T-cell (primary cell): ENCODE measurements at regions of chr3 and their contacts with region 1.

Region 1: GRCh38 chr3:48439820-48440589 is at the starts of genes CCDC51 and TMA7:
- DNase-seq: peak; percentile 92 to 99 (median 97)
- ATAC-seq: peak; percentile 94 to 97 (median 95)
- H3K4me3 ChIP-seq: peak within 1 kb of the TSS; percentile 80 to 90
- H3K4me3 Mint-ChIP-seq: peak within 1 kb of the TSS; percentile 81 to 96 (median 89)
- H3K27ac ChIP-seq: peak within 1 kb of the TSS; percentile 93
- H3K27ac Mint-ChIP-seq: peak within 1 kb of the TSS; percentile 98 to 99
- H3K4me1 ChIP-seq: peaks cover 12 to 49% of the 10 kb centered on the region in 2 experiments
- H3K4me1 Mint-ChIP-seq: peaks cover 28 to 40% (median 37%) of the 10 kb centered on the region in 3 donors
- H3K27me3 ChIP-seq: no peaks in the 10 kb centered on the region
- H3K27me3 Mint-ChIP-seq: no peaks in the 10 kb centered on the region
- total RNA-seq, gene CCDC51: 5.0 to 7.9 (median 6.4) TPM
- total RNA-seq, gene TMA7: 216 to 245 (median 229) TPM

Region 2: GRCh38 chr3:48240711-48241491 is 199.1 kb before region 1 on chr3 and contains the start of gene ZNF589:
- CTCF ChIA-PET with region 1: interaction called in 1 of 2 experiments, 12 read pairs
- POLR2A ChIA-PET with region 1: interaction called in 1 of 2 experiments, 3 read pairs
- DNase-seq: peak; percentile 82 to 99 (median 93)
- ATAC-seq: peak; percentile 97 to 99 (median 99)
- H3K4me3 ChIP-seq: peak within 1 kb of the TSS; percentile 85 to 98
- H3K4me3 Mint-ChIP-seq: peak within 1 kb of the TSS; percentile 85 to 92 (median 90)
- H3K27ac ChIP-seq: peak within 1 kb of the TSS; percentile 82
- H3K27ac Mint-ChIP-seq: peak within 1 kb of the TSS; percentile 90 to 91
- H3K4me1 ChIP-seq: peaks cover 2 to 32% of the 10 kb centered on the region in 2 experiments
- H3K4me1 Mint-ChIP-seq: peaks cover 19 to 31% (median 22%) of the 10 kb centered on the region in 3 donors
- H3K27me3 ChIP-seq: no peaks in the 10 kb centered on the region
- H3K27me3 Mint-ChIP-seq: no peaks in the 10 kb centered on the region
- total RNA-seq, gene ZNF589: 34.4 to 47.6 (median 44.2) TPM

Region 3: DNA sequence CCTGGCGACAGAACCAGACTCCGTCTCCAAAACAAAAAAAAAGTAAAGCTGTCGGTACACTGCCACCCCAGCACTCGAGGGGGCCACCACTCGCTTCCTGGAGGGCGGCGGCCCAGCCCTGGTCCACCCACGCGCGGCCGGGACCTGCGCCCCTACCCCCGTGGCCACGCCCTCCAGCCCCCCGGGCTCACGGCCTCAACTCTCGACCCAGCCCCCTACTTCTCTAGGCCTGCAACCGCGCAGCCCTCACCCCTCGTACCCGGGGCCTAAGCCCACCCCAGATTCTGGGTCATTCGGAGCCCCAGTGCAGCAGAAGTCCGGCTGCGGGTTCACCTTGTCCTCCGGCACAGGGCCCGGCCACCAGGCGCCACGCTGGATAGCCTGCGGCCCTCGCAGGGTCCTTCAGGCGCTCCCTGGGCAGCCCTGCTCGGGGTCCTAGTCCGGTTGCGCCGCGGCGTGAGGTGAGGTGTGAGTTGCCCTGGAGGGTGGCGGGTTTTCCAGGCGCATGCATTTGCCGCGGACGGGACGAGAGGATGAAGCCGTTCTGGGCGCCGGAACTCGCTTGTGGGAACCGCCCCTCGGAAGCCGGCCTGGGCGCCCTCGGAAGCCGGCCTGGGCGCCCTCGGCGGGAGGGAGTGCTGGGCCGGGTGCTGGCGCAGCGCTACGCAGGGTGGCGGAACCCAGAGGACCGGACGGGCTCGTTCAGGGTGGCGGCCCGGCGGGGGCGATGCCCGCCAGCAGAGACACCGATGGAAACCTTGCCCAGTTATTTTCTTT is 138.8 kb before region 1 on chr3:
- CTCF ChIA-PET with region 1: interaction called in 1 of 2 experiments, 11 read pairs
- POLR2A ChIA-PET with region 1: interaction called in 1 of 2 experiments, 3 read pairs
- DNase-seq: peak; percentile 61 to 92 (median 81)
- ATAC-seq: peak; percentile 86 to 93 (median 90)
- H3K4me3 ChIP-seq: peak within 1 kb of the TSS; percentile 68 to 92
- H3K4me3 Mint-ChIP-seq: peak within 1 kb of the TSS; percentile 93 to 96 (median 94)
- H3K27ac ChIP-seq: peak within 1 kb of the TSS; percentile 91
- H3K27ac Mint-ChIP-seq: peak within 1 kb of the TSS; percentile 97 to 99
- H3K4me1 ChIP-seq: peaks cover 8 to 22% of the 10 kb centered on the region in 2 experiments
- H3K4me1 Mint-ChIP-seq: peaks cover 30 to 44% (median 42%) of the 10 kb centered on the region in 3 donors
- H3K27me3 ChIP-seq: no peaks in the 10 kb centered on the region
- H3K27me3 Mint-ChIP-seq: no peaks in the 10 kb centered on the region

Region 4: DNA sequence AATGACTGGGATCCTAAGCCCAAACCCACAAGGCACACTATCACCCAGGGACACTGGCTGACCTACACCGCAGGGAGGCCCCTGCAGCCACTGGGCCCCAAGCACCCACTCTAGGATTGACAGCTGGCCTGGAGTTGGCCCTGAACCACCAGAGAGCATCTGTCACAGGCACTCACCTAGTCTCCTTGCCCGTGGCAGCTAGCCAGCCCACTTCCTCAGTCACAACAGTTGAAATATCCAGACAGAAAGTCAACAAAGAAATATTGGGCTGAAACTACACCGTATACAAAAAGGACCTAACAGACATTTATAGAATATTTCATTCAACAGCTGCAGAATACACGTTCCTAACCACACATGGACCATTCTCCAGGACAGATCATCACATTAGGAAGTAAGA is 101.4 kb before region 1 on chr3:
- CTCF ChIA-PET with region 1: no interaction called
- POLR2A ChIA-PET with region 1: no interaction called
- DNase-seq: no peak
- ATAC-seq: no peak
- H3K4me3 ChIP-seq: no peak overlapping the region
- H3K4me3 Mint-ChIP-seq: no peak overlapping the region
- H3K27ac ChIP-seq: no peak overlapping the region
- H3K27ac Mint-ChIP-seq: no peak overlapping the region
- H3K4me1 ChIP-seq: no peaks in the 10 kb centered on the region
- H3K4me1 Mint-ChIP-seq: no peaks in the 10 kb centered on the region
- H3K27me3 ChIP-seq: peaks cover 0 to 21% of the 10 kb centered on the region in 2 experiments
- H3K27me3 Mint-ChIP-seq: peaks cover 10 to 13% of the 10 kb centered on the region in 2 donors

Region 5: GRCh38 chr3:48465531-48466378 is 25.8 kb after region 1 on chr3:
- CTCF ChIA-PET with region 1: interaction called, 4 to 13 read pairs
- POLR2A ChIA-PET with region 1: interaction called, 3 read pairs
- DNase-seq: peak; percentile 58 to 83 (median 72)
- ATAC-seq: peak; percentile 93 to 96 (median 96)
- H3K4me3 ChIP-seq: peak overlapping the region; percentile 67 to 85
- H3K4me3 Mint-ChIP-seq: peak overlapping the region; percentile 83 to 88 (median 85)
- H3K27ac ChIP-seq: peak overlapping the region; percentile 98
- H3K27ac Mint-ChIP-seq: peak overlapping the region; percentile 94 to 95
- H3K4me1 ChIP-seq: peaks cover 13 to 63% of the 10 kb centered on the region in 2 experiments
- H3K4me1 Mint-ChIP-seq: peaks cover 55 to 58% (median 55%) of the 10 kb centered on the region in 3 donors
- H3K27me3 ChIP-seq: no peaks in the 10 kb centered on the region
- H3K27me3 Mint-ChIP-seq: no peaks in the 10 kb centered on the region

Region 6: DNA sequence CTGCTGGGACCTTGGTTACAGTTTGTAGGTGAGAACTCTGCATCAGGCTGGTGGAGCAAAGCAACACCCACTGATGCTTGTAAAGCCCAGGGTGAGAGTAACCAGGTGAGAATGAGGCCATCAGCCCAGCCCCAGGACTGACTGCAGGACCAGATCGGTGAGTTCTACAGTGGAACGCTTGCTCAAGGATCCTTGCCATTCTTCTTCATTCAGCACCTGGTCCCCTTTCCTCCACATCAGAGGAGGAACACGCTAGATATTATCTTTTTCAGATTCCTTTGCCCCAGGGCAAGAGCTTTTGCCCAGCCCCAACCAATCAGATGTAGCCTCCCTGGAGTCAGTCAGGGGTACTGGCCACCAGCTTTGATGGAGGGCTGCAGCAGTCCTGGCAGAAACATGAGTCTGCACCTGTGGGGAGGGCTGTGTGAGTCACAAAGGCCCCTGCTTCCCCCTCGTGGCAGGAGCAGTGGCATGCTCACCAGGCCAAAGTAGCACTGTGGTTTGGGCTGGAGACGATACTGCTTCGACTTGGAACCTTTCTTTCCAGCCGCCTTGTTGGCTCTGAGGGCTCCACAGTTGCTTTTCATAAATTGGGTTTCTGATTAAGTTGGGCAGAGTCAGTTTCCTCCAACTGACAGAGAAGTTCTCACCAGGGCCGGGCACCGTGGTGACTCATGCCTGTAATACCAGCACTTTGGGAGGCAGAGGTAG is 67.5 kb after region 1 on chr3:
- CTCF ChIA-PET with region 1: interaction called, 4 to 16 read pairs
- POLR2A ChIA-PET with region 1: no interaction called
- DNase-seq: peak; percentile 56 to 84 (median 72)
- ATAC-seq: peak; percentile 82 to 91 (median 84)
- H3K4me3 ChIP-seq: no peak overlapping the region
- H3K4me3 Mint-ChIP-seq: peak overlapping the region in 2 of 3 donors; percentile 45 to 46
- H3K27ac ChIP-seq: peak overlapping the region; percentile 35
- H3K27ac Mint-ChIP-seq: peak overlapping the region; percentile 87 to 92
- H3K4me1 ChIP-seq: peaks cover 21 to 47% of the 10 kb centered on the region in 2 experiments
- H3K4me1 Mint-ChIP-seq: peaks cover 48 to 58% (median 56%) of the 10 kb centered on the region in 3 donors
- H3K27me3 ChIP-seq: no peaks in the 10 kb centered on the region
- H3K27me3 Mint-ChIP-seq: no peaks in the 10 kb centered on the region

Region 7: DNA sequence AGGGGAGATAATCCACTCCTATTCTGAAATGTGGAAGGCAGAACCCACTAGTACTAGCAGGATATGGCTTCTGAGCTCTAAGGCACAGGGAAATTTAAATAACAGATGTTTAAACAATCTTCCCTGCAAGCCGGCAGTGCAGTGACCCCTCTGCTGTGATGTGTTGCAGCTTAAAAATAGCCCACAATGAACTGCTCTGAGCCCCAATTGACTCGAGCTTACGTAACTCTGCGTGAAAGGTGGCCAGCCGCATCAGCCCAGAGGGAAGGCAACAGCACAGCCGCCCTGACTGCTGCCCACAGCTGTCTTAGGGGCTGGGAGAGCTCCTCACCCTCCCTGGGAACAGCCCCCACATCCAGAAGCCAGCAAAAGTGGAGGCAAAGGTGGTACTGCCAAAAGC is 1442.2 kb after region 1 on chr3:
- CTCF ChIA-PET with region 1: no interaction called
- POLR2A ChIA-PET with region 1: interaction called in 1 of 2 experiments, 16 read pairs
- DNase-seq: no peak
- ATAC-seq: no peak
- H3K4me3 ChIP-seq: no peak overlapping the region
- H3K4me3 Mint-ChIP-seq: no peak overlapping the region
- H3K27ac ChIP-seq: no peak overlapping the region
- H3K27ac Mint-ChIP-seq: no peak overlapping the region
- H3K4me1 ChIP-seq: no peaks in the 10 kb centered on the region
- H3K4me1 Mint-ChIP-seq: no peaks in the 10 kb centered on the region
- H3K27me3 ChIP-seq: peaks cover 0 to 11% of the 10 kb centered on the region in 2 experiments
- H3K27me3 Mint-ChIP-seq: peaks cover 2 to 3% of the 10 kb centered on the region in 2 donors